Cardiac septum (tissue), 1 donor: ENCODE measurements at regions of chr14 and their contacts with region 1.

Region 1: GRCh38 chr14:88551094-88551870 is 3.5 kb downstream of the PTPN21 start:
- DNase-seq: peak; percentile 83

Region 2: DNA sequence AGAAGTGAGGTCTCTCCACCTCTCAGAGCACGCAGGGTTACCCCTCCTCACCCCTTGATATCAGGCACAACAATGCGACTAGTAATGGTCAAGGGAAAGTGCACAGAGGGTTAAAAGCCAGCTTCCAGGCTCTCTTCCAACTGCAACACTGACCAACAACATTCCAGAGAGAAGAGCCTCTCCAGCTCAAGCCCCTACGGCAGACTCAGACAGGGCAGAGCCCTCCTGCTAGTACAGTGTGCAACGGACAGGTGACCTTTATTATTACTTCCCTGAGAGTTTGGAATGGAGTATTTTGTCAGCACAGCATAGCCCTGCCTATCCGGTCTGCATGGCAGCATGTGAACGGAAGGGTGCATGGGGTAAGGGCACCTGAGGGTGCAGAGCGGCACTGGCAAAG is 69.5 kb before region 1 on chr14:
- intact Hi-C with region 1: no loop called
- DNase-seq: no peak

Region 3: DNA sequence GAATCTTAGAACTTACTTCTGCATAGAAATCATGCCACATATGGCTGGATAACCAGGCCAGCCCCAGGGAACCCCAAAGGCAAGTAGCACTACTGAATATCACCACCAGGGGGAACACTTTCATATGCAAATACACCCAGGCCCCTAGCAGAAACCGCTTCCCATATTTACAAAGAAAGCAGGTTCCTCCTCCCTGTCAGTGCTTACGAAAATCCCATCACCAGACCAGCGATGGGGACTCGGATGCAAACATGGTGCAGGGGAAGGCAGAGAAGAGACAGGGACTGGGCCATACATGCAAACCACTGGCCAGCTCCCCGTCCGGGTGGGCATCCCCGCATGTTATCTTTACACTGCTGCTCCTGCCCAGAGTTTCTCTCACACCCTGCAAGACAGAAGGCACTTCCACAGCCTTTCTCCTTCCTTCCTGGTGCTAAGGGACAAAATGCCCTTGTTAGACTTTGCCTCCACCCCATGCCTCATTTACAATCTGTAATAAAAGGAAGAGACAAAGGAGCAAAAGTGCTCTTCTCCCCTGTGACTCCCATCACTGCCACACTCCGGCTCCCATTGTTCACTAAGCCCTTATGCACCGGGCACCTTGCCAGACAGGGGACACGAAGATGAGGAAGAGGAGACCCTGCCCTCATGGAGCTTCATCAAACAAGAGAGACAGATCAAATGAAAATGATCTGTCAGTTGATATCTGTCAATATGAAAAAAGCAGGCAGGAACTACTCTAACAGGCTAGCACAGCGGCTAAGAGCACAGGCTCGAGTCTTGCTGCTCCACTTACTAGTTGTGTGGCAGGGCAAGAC is 58.8 kb before region 1 on chr14:
- intact Hi-C with region 1: loop called (anchors 1 kb)
- DNase-seq: no peak